B cell (primary cell): ENCODE measurements at regions of chr19 and their contacts with region 1.

Region 1: DNA sequence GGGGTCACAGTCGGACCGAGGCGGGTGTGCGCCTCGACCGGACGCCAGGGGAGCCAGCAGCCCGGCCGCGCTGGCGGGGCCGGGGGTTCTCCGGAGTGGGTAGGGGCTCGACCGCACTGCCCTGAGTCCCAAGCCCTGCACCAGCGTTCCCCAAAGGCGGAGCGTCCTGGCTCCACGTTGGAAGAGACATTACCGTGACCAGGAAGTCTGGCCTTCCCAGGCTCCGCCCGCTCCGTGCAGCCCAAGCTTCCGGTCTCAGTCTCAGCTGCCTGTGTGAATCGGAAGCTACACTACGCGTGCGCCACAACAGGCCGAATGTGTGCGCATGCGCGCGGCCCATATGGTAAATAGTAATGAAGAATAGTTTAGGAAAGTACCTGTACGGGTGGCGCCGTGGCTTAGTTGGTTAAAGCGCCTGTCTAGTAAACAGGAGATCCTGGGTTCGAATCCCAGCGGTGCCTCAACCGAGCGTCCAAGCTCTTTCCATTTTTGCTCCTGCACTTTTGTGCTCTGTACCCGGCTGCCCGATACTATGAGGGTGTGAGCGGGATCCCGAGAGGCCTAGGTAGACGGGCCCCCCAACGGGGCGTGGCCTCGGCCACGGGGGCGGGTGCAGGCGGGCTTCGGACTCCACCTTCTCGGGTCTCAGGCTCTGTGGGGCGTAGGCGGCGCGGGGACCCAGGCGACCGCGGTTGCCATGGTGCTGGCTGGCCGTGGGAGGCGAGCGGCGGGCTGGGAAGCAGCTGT is 17.3 kb upstream of the LRP3 start:
- DNase-seq: peak; percentile 100
- ATAC-seq: peak; percentile 84
- H3K4me3 ChIP-seq: peak overlapping the region; percentile 43 to 97 (median 90)
- H3K4me3 Mint-ChIP-seq: peak overlapping the region; percentile 97
- H3K27ac ChIP-seq: peak overlapping the region; percentile 83 to 96
- H3K27ac Mint-ChIP-seq: peak overlapping the region; percentile 100
- H3K4me1 ChIP-seq: peaks cover 12 to 37% of the 10 kb centered on the region in 2 donors
- H3K4me1 Mint-ChIP-seq: peaks cover 32% of the 10 kb centered on the region
- H3K27me3 ChIP-seq: no peaks in the 10 kb centered on the region
- H3K27me3 Mint-ChIP-seq: peaks cover 3% of the 10 kb centered on the region
- CTCF ChIP-seq: no peak

Region 2: DNA sequence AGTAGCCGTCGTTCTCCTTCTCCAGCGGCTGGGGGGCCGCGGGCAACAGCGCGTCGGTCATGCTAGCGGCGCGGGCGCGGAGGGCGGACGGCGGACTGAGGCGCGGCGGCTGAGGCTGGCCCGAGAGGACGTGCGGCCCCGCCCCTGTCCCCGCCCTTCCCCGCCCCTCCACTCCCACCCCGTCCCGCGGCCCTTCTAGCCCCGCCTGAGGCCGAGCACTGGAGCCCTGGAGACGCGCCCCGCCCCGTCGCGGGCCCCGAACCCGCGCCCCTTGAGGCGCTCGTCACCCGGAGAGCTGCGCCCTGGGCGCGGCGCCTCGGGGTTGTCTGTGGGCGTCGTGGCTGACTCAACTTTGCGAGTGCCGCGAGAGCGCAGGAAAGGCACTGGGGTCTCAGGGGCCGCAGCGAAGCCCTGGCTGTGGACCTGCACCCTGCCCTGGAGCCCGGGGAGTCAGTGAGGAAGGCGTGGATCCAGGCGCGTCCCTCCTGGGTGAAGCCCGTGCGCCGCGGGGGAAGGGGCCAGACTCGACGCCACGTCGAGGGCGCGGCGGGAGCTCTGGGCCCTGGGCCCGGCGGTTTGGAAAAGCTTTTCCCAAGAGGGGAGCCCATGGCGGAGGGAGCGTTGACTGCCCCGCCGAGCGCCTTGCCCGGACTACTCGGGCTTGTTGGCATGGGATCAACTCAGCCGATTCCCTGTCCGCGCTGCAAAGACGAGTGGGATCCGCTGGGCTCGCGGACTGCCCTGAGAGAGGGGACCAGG is 111.9 kb before region 1 on chr19 and contains the start of gene RHPN2:
- CTCF ChIA-PET with region 1: no interaction called
- POLR2A ChIA-PET with region 1: no interaction called
- intact Hi-C with region 1: loop called (anchors 1 kb)
- DNase-seq: peak; percentile 68
- ATAC-seq: peak; percentile 88
- H3K4me3 ChIP-seq: peak within 1 kb of the TSS in 4 of 5 experiments; percentile 44 to 65 (median 56)
- H3K4me3 Mint-ChIP-seq: peak within 1 kb of the TSS; percentile 79
- H3K27ac ChIP-seq: no peak within 1 kb of the TSS
- H3K27ac Mint-ChIP-seq: peak within 1 kb of the TSS; percentile 61
- H3K4me1 ChIP-seq: peaks cover 15 to 20% of the 10 kb centered on the region in 2 donors
- H3K4me1 Mint-ChIP-seq: peaks cover 7% of the 10 kb centered on the region
- H3K27me3 ChIP-seq: peaks cover 0 to 22% (median 2%) of the 10 kb centered on the region in 4 experiments
- H3K27me3 Mint-ChIP-seq: peaks cover 7% of the 10 kb centered on the region
- CTCF ChIP-seq: no peak
- total RNA-seq, gene RHPN2: 5.2 and 5.5 TPM in 2 replicates

Region 3: GRCh38 chr19:33143897-33144405 is 32.9 kb before region 1 on chr19:
- CTCF ChIA-PET with region 1: interaction called, 14 read pairs
- POLR2A ChIA-PET with region 1: interaction called, 3 read pairs
- intact Hi-C with region 1: loop called (anchors 1 kb)
- DNase-seq: peak; percentile 73
- ATAC-seq: peak; percentile 98
- H3K4me3 ChIP-seq: no peak overlapping the region
- H3K4me3 Mint-ChIP-seq: peak overlapping the region; percentile 48
- H3K27ac ChIP-seq: no peak overlapping the region
- H3K27ac Mint-ChIP-seq: no peak overlapping the region
- H3K4me1 ChIP-seq: peaks cover 0 to 5% of the 10 kb centered on the region in 2 donors
- H3K4me1 Mint-ChIP-seq: peaks cover 4% of the 10 kb centered on the region
- H3K27me3 ChIP-seq: no peaks in the 10 kb centered on the region
- H3K27me3 Mint-ChIP-seq: peaks cover 16% of the 10 kb centered on the region
- CTCF ChIP-seq: peak; percentile 91

Region 4: DNA sequence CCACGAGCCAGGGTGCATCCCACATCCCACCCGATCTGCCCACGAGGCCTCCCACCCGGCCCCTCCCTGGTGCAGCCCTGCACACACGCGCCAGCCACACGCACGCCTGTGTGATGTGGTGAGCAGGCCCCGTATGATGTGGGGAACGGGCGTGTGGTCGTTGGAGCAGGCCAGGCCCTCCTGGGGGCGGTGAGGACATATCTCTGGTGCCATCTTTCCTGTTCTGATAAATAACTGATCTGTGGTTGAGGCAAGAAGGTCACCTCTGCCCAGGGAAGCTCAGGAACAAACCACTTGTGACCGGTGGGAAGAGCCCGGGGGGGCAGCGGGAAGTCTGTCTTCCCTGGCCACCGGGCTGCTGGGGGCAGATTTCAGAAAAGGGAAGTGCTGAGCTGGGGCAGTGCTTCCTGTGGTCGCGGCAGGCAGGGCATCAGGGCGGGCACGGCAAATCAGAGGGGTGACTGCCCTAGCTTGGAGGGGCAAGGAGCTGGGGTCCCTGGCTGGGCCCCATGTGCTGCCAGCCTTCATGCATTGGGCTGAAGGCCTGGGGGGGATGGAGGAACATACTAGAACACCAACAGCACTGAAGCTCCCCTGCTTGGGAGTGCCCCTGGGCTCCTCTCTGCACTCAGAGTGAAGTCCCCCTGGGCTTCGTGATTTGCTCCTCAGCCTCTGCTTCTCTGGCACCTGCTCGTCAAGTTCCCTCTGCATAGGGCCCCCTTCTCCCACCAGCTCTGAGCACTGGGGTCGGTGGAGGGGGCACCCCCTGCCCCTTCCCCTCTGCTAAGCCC is 84.0 kb after region 1 on chr19:
- CTCF ChIA-PET with region 1: no interaction called
- POLR2A ChIA-PET with region 1: no interaction called
- intact Hi-C with region 1: no loop called
- DNase-seq: peak; percentile 32
- ATAC-seq: peak; percentile 14
- H3K4me3 ChIP-seq: no peak overlapping the region
- H3K4me3 Mint-ChIP-seq: peak overlapping the region; percentile 63
- H3K27ac ChIP-seq: no peak overlapping the region
- H3K27ac Mint-ChIP-seq: no peak overlapping the region
- H3K4me1 ChIP-seq: peaks cover 13 to 14% of the 10 kb centered on the region in 2 donors
- H3K4me1 Mint-ChIP-seq: peaks cover 14% of the 10 kb centered on the region
- H3K27me3 ChIP-seq: peaks cover 0 to 10% (median 4%) of the 10 kb centered on the region in 4 experiments
- H3K27me3 Mint-ChIP-seq: peaks cover 23% of the 10 kb centered on the region
- CTCF ChIP-seq: no peak

Region 5: GRCh38 chr19:33373701-33374421 is 197.0 kb after region 1 on chr19 and contains the start of gene CEBPG:
- CTCF ChIA-PET with region 1: interaction called, 8 read pairs
- POLR2A ChIA-PET with region 1: interaction called, 10 read pairs
- intact Hi-C with region 1: loop called (anchors 1 kb)
- DNase-seq: no peak
- ATAC-seq: peak; percentile 32
- H3K4me3 ChIP-seq: peak within 1 kb of the TSS; percentile 69 to 91 (median 83)
- H3K4me3 Mint-ChIP-seq: peak within 1 kb of the TSS; percentile 89
- H3K27ac ChIP-seq: peak within 1 kb of the TSS; percentile 90 to 96
- H3K27ac Mint-ChIP-seq: peak within 1 kb of the TSS; percentile 95
- H3K4me1 ChIP-seq: peaks cover 20 to 24% of the 10 kb centered on the region in 2 donors
- H3K4me1 Mint-ChIP-seq: peaks cover 42% of the 10 kb centered on the region
- H3K27me3 ChIP-seq: no peaks in the 10 kb centered on the region
- H3K27me3 Mint-ChIP-seq: no peaks in the 10 kb centered on the region
- CTCF ChIP-seq: peak; percentile 22
- total RNA-seq, gene CEBPG: 23.4 and 24.2 TPM in 2 replicates

Region 6: GRCh38 chr19:34364830-34365462 is 1188.1 kb after region 1 on chr19 and contains the start of gene GPI:
- CTCF ChIA-PET with region 1: no interaction called
- POLR2A ChIA-PET with region 1: no interaction called
- intact Hi-C with region 1: loop called (anchors 2 kb)
- DNase-seq: peak; percentile 80
- ATAC-seq: peak; percentile 95
- H3K4me3 ChIP-seq: peak within 1 kb of the TSS; percentile 30 to 87 (median 70)
- H3K4me3 Mint-ChIP-seq: peak within 1 kb of the TSS; percentile 98
- H3K27ac ChIP-seq: peak within 1 kb of the TSS; percentile 7 to 68
- H3K27ac Mint-ChIP-seq: peak within 1 kb of the TSS; percentile 91
- H3K4me1 ChIP-seq: peaks cover 13 to 25% of the 10 kb centered on the region in 2 donors
- H3K4me1 Mint-ChIP-seq: peaks cover 23% of the 10 kb centered on the region
- H3K27me3 ChIP-seq: no peaks in the 10 kb centered on the region
- H3K27me3 Mint-ChIP-seq: no peaks in the 10 kb centered on the region
- CTCF ChIP-seq: no peak
- total RNA-seq, gene GPI: 99.3 and 102 TPM in 2 replicates